ENCODE measurements at regions of chr1 and their contacts with region 1.

Region 1: DNA sequence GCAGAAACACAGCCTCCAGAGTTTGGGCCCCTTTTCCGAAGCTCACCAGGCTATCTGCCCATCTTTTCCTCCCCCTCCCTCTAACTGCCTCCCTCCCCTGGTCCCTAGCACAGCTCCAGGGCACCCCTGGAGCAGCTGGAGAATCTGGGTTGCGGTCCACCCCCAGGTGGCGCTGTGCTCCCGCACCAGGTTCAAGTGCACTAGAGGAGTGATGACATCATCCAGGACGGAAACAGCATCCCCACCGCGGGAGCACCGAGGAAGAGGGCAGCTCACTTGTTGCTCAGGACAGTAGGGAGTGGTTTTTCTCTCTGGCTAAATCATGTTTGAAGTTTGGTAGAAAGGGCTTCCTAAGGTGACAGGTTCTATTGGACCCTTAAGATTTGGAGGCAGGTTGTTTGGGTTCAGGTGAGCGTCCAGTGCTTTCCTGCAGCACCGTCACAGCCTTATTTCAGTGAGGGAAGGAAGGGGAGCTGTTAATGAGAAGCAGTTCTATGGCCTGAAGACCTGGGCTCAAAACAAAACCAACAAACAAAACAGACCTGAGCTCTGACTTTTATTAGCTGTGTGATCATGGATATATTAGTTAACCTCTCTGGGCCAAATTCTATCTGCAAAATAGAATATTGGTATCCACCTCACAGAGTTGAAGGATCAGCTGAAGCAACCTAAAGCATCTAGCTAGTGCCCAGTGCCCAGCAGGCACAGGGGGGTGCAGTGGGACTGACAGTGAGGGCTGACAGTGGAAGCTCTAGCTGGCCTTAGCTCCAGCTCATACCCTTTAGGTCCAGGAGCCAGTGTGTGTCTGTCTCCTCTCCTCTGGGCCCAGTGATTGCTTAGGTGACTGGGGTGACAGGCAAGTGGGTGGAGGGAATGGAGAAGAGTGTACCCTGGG is 7.5 kb downstream of the SHISA4 start:
- DNase-seq: peak; percentile 94
- ATAC-seq: peak; percentile 76
- H3K4me3 ChIP-seq: no peak overlapping the region
- H3K27ac ChIP-seq: peak overlapping the region; percentile 72
- H3K4me1 ChIP-seq: peaks cover 13% of the 10 kb centered on the region
- H3K27me3 ChIP-seq: no peaks in the 10 kb centered on the region
- CTCF ChIP-seq: peak; percentile 98
- POLR2A ChIP-seq: 0 out of 2 replicates have a peak, but pooled peaks have one; percentile 28
- RAD21 ChIP-seq: peak; percentile 97

Region 2: GRCh38 chr1:201916649-201917249 is 20.6 kb after region 1 on chr1:
- CTCF ChIA-PET with region 1: interaction called, 5 read pairs
- POLR2A ChIA-PET with region 1: no interaction called
- dilution Hi-C with region 1: no loop called
- in situ Hi-C with region 1: no loop called
- intact Hi-C with region 1: loop called (anchors 2 kb)
- DNase-seq: peak; percentile 94
- ATAC-seq: peak; percentile 73
- H3K4me3 ChIP-seq: no peak overlapping the region
- H3K27ac ChIP-seq: peak overlapping the region; percentile 87
- H3K4me1 ChIP-seq: peaks cover 43% of the 10 kb centered on the region
- H3K27me3 ChIP-seq: no peaks in the 10 kb centered on the region
- CTCF ChIP-seq: no peak
- POLR2A ChIP-seq: no peak
- RAD21 ChIP-seq: no peak; the same call in 1 of the 2 replicates

Region 3: GRCh38 chr1:201946224-201946908 is 50.2 kb after region 1 on chr1 and contains the start of gene LMOD1:
- CTCF ChIA-PET with region 1: interaction called, 27 read pairs
- POLR2A ChIA-PET with region 1: interaction called, 7 read pairs
- dilution Hi-C with region 1: no loop called
- in situ Hi-C with region 1: no loop called
- intact Hi-C with region 1: loop called (anchors 1 kb)
- DNase-seq: peak; percentile 98
- ATAC-seq: peak; percentile 94
- H3K4me3 ChIP-seq: peak within 1 kb of the TSS; percentile 72
- H3K27ac ChIP-seq: peak within 1 kb of the TSS; percentile 91
- H3K4me1 ChIP-seq: peaks cover 26% of the 10 kb centered on the region
- H3K27me3 ChIP-seq: no peaks in the 10 kb centered on the region
- CTCF ChIP-seq: no peak; the same call in 1 of the 2 replicates
- POLR2A ChIP-seq: peak; percentile 88
- RAD21 ChIP-seq: no peak
- total RNA-seq, gene LMOD1: 44.4 and 53.2 TPM in 2 replicates

Region 4: GRCh38 chr1:201955009-201955728 is 59.0 kb after region 1 on chr1 and contains the start of gene TIMM17A:
- CTCF ChIA-PET with region 1: interaction called, 4 read pairs
- POLR2A ChIA-PET with region 1: interaction called, 4 read pairs
- dilution Hi-C with region 1: no loop called
- in situ Hi-C with region 1: no loop called
- intact Hi-C with region 1: loop called (anchors 1 kb)
- DNase-seq: peak; percentile 98
- ATAC-seq: peak; percentile 100
- H3K4me3 ChIP-seq: peak within 1 kb of the TSS; percentile 82
- H3K27ac ChIP-seq: peak within 1 kb of the TSS; percentile 93
- H3K4me1 ChIP-seq: peaks cover 2% of the 10 kb centered on the region; the same call in 1 of the 2 replicates
- H3K27me3 ChIP-seq: no peaks in the 10 kb centered on the region
- CTCF ChIP-seq: no peak
- POLR2A ChIP-seq: peak; percentile 97
- RAD21 ChIP-seq: no peak; the same call in 1 of the 2 replicates
- total RNA-seq, gene TIMM17A: 87.3 and 114 TPM in 2 replicates

Region 5: GRCh38 chr1:201964261-201964660 is 68.1 kb after region 1 on chr1:
- CTCF ChIA-PET with region 1: interaction called, 12 read pairs
- POLR2A ChIA-PET with region 1: interaction called, 3 read pairs
- dilution Hi-C with region 1: no loop called
- in situ Hi-C with region 1: loop called (anchors 5 kb)
- intact Hi-C with region 1: no loop called
- DNase-seq: peak; percentile 80
- ATAC-seq: peak; percentile 87
- H3K4me3 ChIP-seq: no peak overlapping the region
- H3K27ac ChIP-seq: no peak overlapping the region
- H3K4me1 ChIP-seq: no peaks in the 10 kb centered on the region
- H3K27me3 ChIP-seq: no peaks in the 10 kb centered on the region
- CTCF ChIP-seq: no peak
- POLR2A ChIP-seq: no peak
- RAD21 ChIP-seq: no peak

Region 6: GRCh38 chr1:201970334-201971159 is 74.4 kb after region 1 on chr1:
- CTCF ChIA-PET with region 1: interaction called, 21 read pairs
- POLR2A ChIA-PET with region 1: no interaction called
- dilution Hi-C with region 1: no loop called
- in situ Hi-C with region 1: loop called (anchors 5 kb)
- intact Hi-C with region 1: loop called (anchors 1 kb)
- DNase-seq: peak; percentile 58
- ATAC-seq: peak; percentile 56; the same call in 1 of the 2 replicates
- H3K4me3 ChIP-seq: no peak overlapping the region
- H3K27ac ChIP-seq: no peak overlapping the region
- H3K4me1 ChIP-seq: no peaks in the 10 kb centered on the region; the same call in 1 of the 2 replicates
- H3K27me3 ChIP-seq: no peaks in the 10 kb centered on the region
- CTCF ChIP-seq: no peak
- POLR2A ChIP-seq: no peak
- RAD21 ChIP-seq: no peak

Region 7: GRCh38 chr1:202122639-202123335 is 226.6 kb after region 1 on chr1 and contains the start of gene GPR37L1:
- CTCF ChIA-PET with region 1: no interaction called
- POLR2A ChIA-PET with region 1: no interaction called
- dilution Hi-C with region 1: no loop called
- in situ Hi-C with region 1: loop called (anchors 10 kb)
- intact Hi-C with region 1: no loop called
- DNase-seq: peak; percentile 50
- ATAC-seq: peak; percentile 84
- H3K4me3 ChIP-seq: no peak within 1 kb of the TSS
- H3K27ac ChIP-seq: no peak within 1 kb of the TSS
- H3K4me1 ChIP-seq: no peaks in the 10 kb centered on the region
- H3K27me3 ChIP-seq: peaks cover 24% of the 10 kb centered on the region
- CTCF ChIP-seq: peak; percentile 58
- POLR2A ChIP-seq: no peak
- RAD21 ChIP-seq: peak; percentile 36
- total RNA-seq, gene GPR37L1: not detected in 2 replicates